Right ventricle myocardium inferior (tissue), 1 donor: ENCODE measurements at regions of chr1 and their contacts with region 1.

Region 1: GRCh38 chr1:243850452-243851256 is 611 bp upstream of the AKT3 start:
- DNase-seq: peak; percentile 89
- ATAC-seq: peak; percentile 66

Region 2: GRCh38 chr1:243798726-243799125 is 51.9 kb before region 1 on chr1:
- intact Hi-C with region 1: loop called (anchors 5 kb)
- DNase-seq: no peak
- ATAC-seq: no peak

Region 3: DNA sequence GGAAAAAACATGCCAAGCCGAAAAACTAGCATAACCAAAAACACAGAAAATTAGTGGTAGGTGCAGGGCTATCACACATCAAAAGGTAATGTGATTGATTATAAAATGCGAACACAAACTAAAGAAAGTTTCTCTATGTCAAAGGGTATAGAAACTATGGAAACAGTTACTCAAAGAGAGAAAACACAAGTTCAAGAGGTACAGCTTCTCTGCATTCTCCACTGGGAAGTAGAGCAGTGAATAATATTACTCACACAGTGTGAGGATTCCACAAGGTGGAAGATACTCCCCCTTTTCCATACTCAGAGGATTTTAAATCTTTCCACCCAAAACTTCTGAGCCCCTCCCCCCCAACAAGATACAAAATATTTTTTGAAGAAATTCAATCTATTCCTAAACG is 19.2 kb before region 1 on chr1:
- intact Hi-C with region 1: no loop called
- DNase-seq: no peak
- ATAC-seq: no peak

Region 4: GRCh38 chr1:243917177-243917862 is 66.7 kb after region 1 on chr1:
- intact Hi-C with region 1: loop called (anchors 5 kb)
- DNase-seq: no peak
- ATAC-seq: peak; percentile 76

Region 5: GRCh38 chr1:244047621-244048471 is 197.2 kb after region 1 on chr1:
- intact Hi-C with region 1: loop called (anchors 1 kb)
- DNase-seq: peak; percentile 99
- ATAC-seq: peak; percentile 98